ENCODE measurements at regions of chr9 and their contacts with region 1.

Region 1: GRCh38 chr9:21455320-21455719 is 15.1 kb downstream of the IFNA1 start:
- DNase-seq: no peak
- H3K4me3 ChIP-seq: no peak overlapping the region
- CTCF ChIP-seq: no peak
- POLR2A ChIP-seq: no peak

Region 2: GRCh38 chr9:21326526-21327139 is 128.7 kb before region 1 on chr9:
- intact Hi-C with region 1: loop called (anchors 10 kb)
- DNase-seq: no peak
- H3K4me3 ChIP-seq: no peak overlapping the region
- CTCF ChIP-seq: no peak
- POLR2A ChIP-seq: no peak

Region 3: GRCh38 chr9:21506626-21507484 is 51.5 kb after region 1 on chr9:
- intact Hi-C with region 1: no loop called
- DNase-seq: no peak
- H3K4me3 ChIP-seq: no peak overlapping the region
- CTCF ChIP-seq: no peak
- POLR2A ChIP-seq: no peak